Heart right ventricle (tissue), 16 donors: ENCODE measurements at regions of chr7 and their contacts with region 1.

Region 1: DNA sequence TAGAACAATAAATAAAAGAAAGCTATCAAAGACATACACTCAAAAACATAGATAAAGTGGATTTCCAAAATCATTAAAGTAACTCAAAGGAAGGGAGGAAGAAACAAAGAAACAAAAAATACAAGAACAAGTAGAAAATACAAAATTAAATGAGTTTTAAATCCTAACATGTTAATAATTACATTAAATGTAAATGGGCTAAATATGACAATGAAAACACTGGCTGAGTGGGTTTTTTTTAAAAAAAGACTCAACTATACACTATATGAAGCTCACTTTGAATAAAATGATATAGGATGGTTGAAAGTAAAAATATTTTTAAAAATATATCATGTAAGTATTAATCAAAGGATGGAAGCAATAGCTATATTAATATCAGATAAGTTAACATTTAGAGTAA is 371.4 kb downstream of the PTPRN2 start:
- DNase-seq: no peak
- ATAC-seq: no peak
- H3K4me3 ChIP-seq: no peak overlapping the region
- H3K27ac ChIP-seq: no peak overlapping the region
- H3K4me1 ChIP-seq: no peaks in the 10 kb centered on the region
- H3K27me3 ChIP-seq: peaks cover 0 to 4% (median 0%) of the 10 kb centered on the region in 7 donors
- CTCF ChIP-seq: no peak

Region 2: GRCh38 chr7:158239290-158239981 is 23.2 kb after region 1 on chr7:
- intact Hi-C with region 1: no loop called
- DNase-seq: peak in 1 of 2 donors; percentile 66
- ATAC-seq: peak in 6 of 8 donors; percentile 25 to 79 (median 70)
- H3K4me3 ChIP-seq: peak overlapping the region in 3 of 10 donors; percentile 6 to 33 (median 20)
- H3K27ac ChIP-seq: peak overlapping the region in 5 of 10 donors; percentile 30 to 60 (median 48)
- H3K4me1 ChIP-seq: no peaks in the 10 kb centered on the region
- H3K27me3 ChIP-seq: peaks cover 0 to 6% (median 0%) of the 10 kb centered on the region in 7 donors
- CTCF ChIP-seq: no peak

Region 3: DNA sequence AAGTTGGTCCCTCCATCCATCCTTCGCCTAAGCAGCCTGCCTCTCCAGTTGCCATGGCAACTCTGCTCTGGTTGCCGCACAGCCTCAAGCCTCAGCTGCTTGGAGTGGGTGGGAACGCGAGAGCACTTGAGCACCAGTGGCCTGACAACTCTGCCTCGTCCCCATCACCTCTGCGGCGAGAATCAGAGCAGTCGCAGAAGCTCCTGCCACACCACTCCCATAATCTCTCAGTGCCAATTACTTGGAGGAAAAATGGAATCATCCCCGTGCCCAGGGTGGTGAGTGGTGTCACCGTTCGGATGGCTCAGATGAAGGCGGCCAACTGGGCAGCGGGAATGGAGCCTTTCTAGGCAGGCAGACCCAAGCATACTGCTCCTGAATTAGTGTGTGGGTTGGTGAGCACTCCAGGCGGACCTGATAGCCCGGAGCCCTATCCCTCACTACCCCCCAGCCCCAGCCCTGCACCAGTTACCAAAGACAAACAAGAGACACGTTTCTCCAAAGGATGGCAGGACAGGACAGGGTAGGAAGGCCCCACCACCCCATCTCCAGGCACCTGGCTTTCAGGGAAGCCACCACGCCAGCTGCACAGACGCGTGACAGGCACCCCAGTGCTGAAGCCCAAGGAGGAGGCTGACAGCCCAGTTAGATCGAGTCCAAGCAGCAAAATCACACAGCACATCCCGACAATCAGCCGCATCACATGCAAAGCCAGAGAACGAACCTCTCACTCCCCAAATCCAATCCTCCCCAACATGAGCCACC is 36.1 kb after region 1 on chr7:
- intact Hi-C with region 1: no loop called
- DNase-seq: no peak
- ATAC-seq: no peak
- H3K4me3 ChIP-seq: no peak overlapping the region
- H3K27ac ChIP-seq: no peak overlapping the region
- H3K4me1 ChIP-seq: no peaks in the 10 kb centered on the region
- H3K27me3 ChIP-seq: no peaks in the 10 kb centered on the region
- CTCF ChIP-seq: no peak

Region 4: GRCh38 chr7:158609313-158609974 is 393.2 kb after region 1 on chr7:
- intact Hi-C with region 1: loop called in 1 of 10 experiments (anchors 5 kb)
- DNase-seq: no peak
- ATAC-seq: no peak
- H3K4me3 ChIP-seq: no peak overlapping the region
- H3K27ac ChIP-seq: no peak overlapping the region
- H3K4me1 ChIP-seq: no peaks in the 10 kb centered on the region
- H3K27me3 ChIP-seq: no peaks in the 10 kb centered on the region
- CTCF ChIP-seq: no peak